Endothelial cell of umbilical vein (primary cell): ENCODE measurements at regions of chr22 and their contacts with region 1.

Region 1: GRCh38 chr22:30005213-30005857 is 74.9 kb upstream of the HORMAD2 start:
- DNase-seq: peak; percentile 77
- H3K4me3 ChIP-seq: no peak overlapping the region
- H3K27ac ChIP-seq: no peak overlapping the region
- H3K4me1 ChIP-seq: peaks cover 4% of the 10 kb centered on the region
- H3K27me3 ChIP-seq: no peaks in the 10 kb centered on the region
- CTCF ChIP-seq: peak; percentile 85 to 98
- POLR2A ChIP-seq: no peak

Region 2: GRCh38 chr22:29635734-29636357 is 369.5 kb before region 1 on chr22:
- CTCF ChIA-PET with region 1: interaction called, 50 read pairs
- POLR2A ChIA-PET with region 1: no interaction called
- dilution Hi-C with region 1: no loop called
- intact Hi-C with region 1: loop called (anchors 5 kb)
- DNase-seq: peak; percentile 64
- H3K4me3 ChIP-seq: no peak overlapping the region
- H3K27ac ChIP-seq: no peak overlapping the region
- H3K4me1 ChIP-seq: peaks cover 50% of the 10 kb centered on the region
- H3K27me3 ChIP-seq: no peaks in the 10 kb centered on the region
- CTCF ChIP-seq: peak; percentile 60 to 65
- POLR2A ChIP-seq: no peak

Region 3: GRCh38 chr22:29766632-29767170 is 238.6 kb before region 1 on chr22 and contains the start of gene ZMAT5:
- CTCF ChIA-PET with region 1: interaction called, 10 read pairs
- POLR2A ChIA-PET with region 1: no interaction called
- dilution Hi-C with region 1: no loop called
- intact Hi-C with region 1: loop called (anchors 1 kb)
- DNase-seq: peak; percentile 96
- H3K4me3 ChIP-seq: peak within 1 kb of the TSS; percentile 44 to 98 (median 81)
- H3K27ac ChIP-seq: peak within 1 kb of the TSS; percentile 67
- H3K4me1 ChIP-seq: peaks cover 12% of the 10 kb centered on the region
- H3K27me3 ChIP-seq: no peaks in the 10 kb centered on the region
- CTCF ChIP-seq: no peak
- POLR2A ChIP-seq: peak; percentile 27
- total RNA-seq, gene ZMAT5: 23.1 and 24.9 TPM in 2 replicates

Region 4: DNA sequence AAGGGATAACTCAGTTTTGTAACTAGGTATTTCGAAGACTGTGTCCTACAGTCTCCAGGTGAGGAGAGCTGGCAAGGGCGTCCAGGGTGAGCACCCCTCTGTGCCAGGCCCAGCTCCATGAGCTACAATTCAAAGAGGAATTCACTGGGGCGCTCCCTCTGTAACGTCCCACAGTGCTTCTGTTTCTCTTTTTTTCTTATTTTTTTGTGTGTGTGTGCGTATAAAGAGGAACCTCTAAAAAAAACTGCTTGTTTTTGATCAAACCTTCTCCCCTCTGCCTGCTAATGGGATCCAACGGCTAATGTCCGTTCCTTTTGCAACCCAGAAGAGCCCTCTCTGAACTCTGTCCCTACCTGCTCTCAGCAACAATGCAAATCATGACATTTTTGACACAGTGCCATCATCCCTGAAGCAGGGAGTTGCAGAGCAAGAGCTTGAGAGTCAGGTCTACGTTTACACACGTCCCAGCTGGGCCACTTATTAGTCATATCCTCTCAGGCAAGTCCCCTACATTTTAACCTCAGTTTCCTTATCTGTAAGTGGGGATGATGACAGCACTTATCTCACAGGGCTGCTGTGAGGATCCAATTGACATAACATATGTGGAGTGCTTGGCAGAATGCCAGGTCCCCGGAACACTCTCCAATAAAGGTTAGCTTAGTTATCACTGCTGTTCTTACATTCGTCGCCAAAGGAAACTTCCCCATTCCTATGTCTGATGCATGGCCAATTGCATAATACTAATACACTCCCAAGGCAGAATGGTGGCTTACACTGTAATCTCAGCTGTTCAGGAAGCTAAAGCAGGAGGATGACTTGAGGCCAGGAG is 184.2 kb before region 1 on chr22:
- CTCF ChIA-PET with region 1: interaction called, 25 read pairs
- POLR2A ChIA-PET with region 1: no interaction called
- dilution Hi-C with region 1: no loop called
- intact Hi-C with region 1: loop called (anchors 1 kb)
- DNase-seq: peak; percentile 84
- H3K4me3 ChIP-seq: no peak overlapping the region
- H3K27ac ChIP-seq: peak overlapping the region; percentile 51
- H3K4me1 ChIP-seq: peaks cover 20% of the 10 kb centered on the region
- H3K27me3 ChIP-seq: no peaks in the 10 kb centered on the region
- CTCF ChIP-seq: no peak
- POLR2A ChIP-seq: no peak

Region 5: GRCh38 chr22:29947410-29948384 is 57.6 kb before region 1 on chr22:
- CTCF ChIA-PET with region 1: interaction called, 10 read pairs
- POLR2A ChIA-PET with region 1: no interaction called
- dilution Hi-C with region 1: no loop called
- intact Hi-C with region 1: no loop called
- DNase-seq: peak; percentile 23
- H3K4me3 ChIP-seq: no peak overlapping the region
- H3K27ac ChIP-seq: no peak overlapping the region
- H3K4me1 ChIP-seq: no peaks in the 10 kb centered on the region
- H3K27me3 ChIP-seq: no peaks in the 10 kb centered on the region
- CTCF ChIP-seq: no peak
- POLR2A ChIP-seq: no peak

Region 6: DNA sequence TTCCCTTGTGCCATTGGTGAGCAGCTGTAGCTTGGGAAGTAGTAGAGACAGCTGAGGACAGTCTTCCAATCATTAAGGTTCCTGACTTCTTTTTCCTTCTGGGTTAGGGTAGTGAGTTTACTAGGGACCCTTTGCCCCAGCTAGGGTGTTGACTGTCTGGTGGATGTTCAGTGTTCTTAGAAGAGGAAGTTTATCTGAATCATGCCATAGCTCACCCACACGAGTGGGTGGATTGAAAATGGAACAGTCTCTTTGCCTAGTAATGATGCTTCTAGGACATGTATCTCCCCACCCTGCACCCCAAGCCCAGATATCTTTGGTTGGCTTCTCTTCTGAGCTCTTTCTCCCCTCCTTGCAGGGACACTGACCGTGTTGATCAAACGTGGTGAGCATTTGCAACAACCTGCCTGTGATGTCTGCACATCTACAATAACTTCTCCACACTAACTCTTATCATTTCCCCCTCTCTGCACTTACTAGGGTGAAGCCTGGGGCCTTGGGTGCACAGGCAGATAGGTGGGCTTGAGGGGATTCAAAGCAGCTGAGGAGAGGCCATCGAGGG is 17.8 kb after region 1 on chr22:
- CTCF ChIA-PET with region 1: interaction called, 12 read pairs
- POLR2A ChIA-PET with region 1: interaction called, 3 read pairs
- dilution Hi-C with region 1: no loop called
- intact Hi-C with region 1: no loop called
- DNase-seq: no peak
- H3K4me3 ChIP-seq: no peak overlapping the region
- H3K27ac ChIP-seq: no peak overlapping the region
- H3K4me1 ChIP-seq: no peaks in the 10 kb centered on the region
- H3K27me3 ChIP-seq: no peaks in the 10 kb centered on the region
- CTCF ChIP-seq: no peak
- POLR2A ChIP-seq: no peak

Region 7: DNA sequence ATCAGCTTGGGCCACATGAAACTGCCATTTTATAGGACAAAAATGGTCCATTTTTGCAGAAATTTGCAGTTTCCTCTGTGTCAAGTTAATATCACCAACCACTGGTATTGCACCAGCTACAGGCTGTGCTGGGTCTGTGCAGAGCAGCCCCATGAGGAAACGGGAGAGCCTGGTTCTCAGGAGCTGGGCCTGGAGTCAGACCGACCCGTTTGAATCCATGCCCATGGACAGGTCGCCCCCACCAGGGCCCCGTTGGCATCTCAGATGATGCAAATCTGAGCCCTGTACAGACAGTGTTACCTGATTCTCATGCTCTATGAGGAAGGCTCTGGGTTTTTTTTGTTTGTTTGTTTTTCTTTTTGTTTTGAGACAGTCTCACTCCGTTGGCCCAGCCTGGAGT is 551.1 kb after region 1 on chr22:
- CTCF ChIA-PET with region 1: no interaction called
- POLR2A ChIA-PET with region 1: no interaction called
- dilution Hi-C with region 1: no loop called
- intact Hi-C with region 1: no loop called
- DNase-seq: no peak
- H3K4me3 ChIP-seq: no peak overlapping the region
- H3K27ac ChIP-seq: no peak overlapping the region
- H3K4me1 ChIP-seq: no peaks in the 10 kb centered on the region
- H3K27me3 ChIP-seq: no peaks in the 10 kb centered on the region
- CTCF ChIP-seq: no peak
- POLR2A ChIP-seq: no peak